ENCODE measurements at regions of chr6 and their contacts with region 1.

Region 1: GRCh38 chr6:123965894-123966293 is 162.2 kb downstream of the NKAIN2 start:
- DNase-seq: peak; percentile 61
- H3K4me3 ChIP-seq: no peak overlapping the region
- H3K27ac ChIP-seq: no peak overlapping the region
- H3K4me1 ChIP-seq: no peaks in the 10 kb centered on the region
- H3K27me3 ChIP-seq: no peaks in the 10 kb centered on the region
- CTCF ChIP-seq: peak; percentile 47 to 48
- POLR2A ChIP-seq: no peak

Region 2: DNA sequence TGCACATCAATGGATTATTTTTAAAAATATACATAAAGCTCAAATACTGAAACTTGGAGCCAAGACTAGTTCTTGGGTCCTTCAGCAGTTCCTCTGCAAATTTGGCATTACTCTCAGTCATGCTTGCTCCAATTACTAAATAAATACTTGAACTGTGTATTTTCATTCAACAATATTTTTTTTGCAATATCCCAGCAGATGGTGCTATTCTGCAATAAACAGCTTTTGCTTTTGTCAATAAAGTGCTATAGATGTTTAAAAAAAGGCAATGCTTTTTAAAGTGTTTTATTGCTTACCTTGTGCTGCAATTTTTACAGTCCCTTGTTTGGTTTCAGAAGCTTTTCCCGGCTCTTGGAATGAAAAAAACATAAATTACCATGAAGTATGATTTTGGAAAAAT is 572.6 kb before region 1 on chr6:
- CTCF ChIA-PET with region 1: no interaction called
- POLR2A ChIA-PET with region 1: no interaction called
- dilution Hi-C with region 1: no loop called
- intact Hi-C with region 1: loop called (anchors 1 kb)
- DNase-seq: peak; percentile 12
- H3K4me3 ChIP-seq: no peak overlapping the region
- H3K27ac ChIP-seq: no peak overlapping the region
- H3K4me1 ChIP-seq: no peaks in the 10 kb centered on the region
- H3K27me3 ChIP-seq: no peaks in the 10 kb centered on the region
- CTCF ChIP-seq: no peak
- POLR2A ChIP-seq: no peak

Region 3: GRCh38 chr6:123415844-123416468 is 549.9 kb before region 1 on chr6:
- CTCF ChIA-PET with region 1: no interaction called
- POLR2A ChIA-PET with region 1: no interaction called
- dilution Hi-C with region 1: no loop called
- intact Hi-C with region 1: loop called (anchors 5 kb)
- DNase-seq: peak; percentile 56
- H3K4me3 ChIP-seq: no peak overlapping the region
- H3K27ac ChIP-seq: no peak overlapping the region
- H3K4me1 ChIP-seq: no peaks in the 10 kb centered on the region
- H3K27me3 ChIP-seq: peaks cover 2 to 6% of the 10 kb centered on the region in 2 experiments
- CTCF ChIP-seq: peak; percentile 50 to 54
- POLR2A ChIP-seq: no peak

Region 4: DNA sequence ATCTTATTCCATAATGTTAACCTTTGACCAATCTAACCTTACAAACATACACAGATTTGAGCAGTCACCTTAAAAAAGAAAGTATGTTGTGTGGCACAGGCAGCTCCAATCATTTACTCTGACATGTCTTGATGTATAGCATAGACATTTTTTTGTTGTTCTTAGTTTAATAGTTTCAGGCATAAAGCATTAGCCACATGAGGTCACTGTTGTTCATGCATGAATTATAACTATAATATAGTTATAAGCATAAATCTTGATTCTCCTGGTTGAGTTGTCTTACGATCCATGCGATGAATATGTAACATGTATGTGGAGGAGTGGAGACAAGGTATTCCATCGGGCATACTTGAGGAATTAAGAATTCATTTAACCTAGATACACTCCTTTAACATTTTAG is 188.3 kb before region 1 on chr6:
- CTCF ChIA-PET with region 1: no interaction called
- POLR2A ChIA-PET with region 1: no interaction called
- dilution Hi-C with region 1: no loop called
- intact Hi-C with region 1: loop called (anchors 1 kb)
- DNase-seq: peak; percentile 46
- H3K4me3 ChIP-seq: no peak overlapping the region
- H3K27ac ChIP-seq: no peak overlapping the region
- H3K4me1 ChIP-seq: no peaks in the 10 kb centered on the region
- H3K27me3 ChIP-seq: no peaks in the 10 kb centered on the region
- CTCF ChIP-seq: peak in 1 of 2 donors; percentile 14
- POLR2A ChIP-seq: no peak

Region 5: DNA sequence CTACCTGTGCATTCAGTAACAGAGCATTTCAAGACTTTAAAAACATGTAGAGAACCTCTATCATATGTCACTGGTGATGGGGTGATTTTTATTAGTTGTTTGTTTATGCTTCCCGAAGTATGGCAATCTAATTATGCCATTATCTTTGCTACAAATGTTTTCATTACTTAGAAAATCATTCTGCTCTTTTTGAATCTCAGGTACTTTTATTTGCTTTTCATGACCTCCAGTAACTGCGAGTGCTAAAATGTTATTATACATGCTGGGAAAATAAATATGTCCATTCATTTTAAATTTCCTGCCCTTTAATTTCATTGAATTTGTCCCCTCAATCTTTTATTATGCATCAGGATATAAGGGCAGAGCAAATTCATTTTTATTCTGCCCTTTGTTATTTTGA is 353.5 kb after region 1 on chr6:
- CTCF ChIA-PET with region 1: no interaction called
- POLR2A ChIA-PET with region 1: no interaction called
- dilution Hi-C with region 1: no loop called
- intact Hi-C with region 1: no loop called
- DNase-seq: no peak
- H3K4me3 ChIP-seq: no peak overlapping the region
- H3K27ac ChIP-seq: no peak overlapping the region
- H3K4me1 ChIP-seq: no peaks in the 10 kb centered on the region
- H3K27me3 ChIP-seq: no peaks in the 10 kb centered on the region
- CTCF ChIP-seq: no peak
- POLR2A ChIP-seq: no peak

Region 6: GRCh38 chr6:124854338-124854922 is 888.5 kb after region 1 on chr6:
- CTCF ChIA-PET with region 1: no interaction called
- POLR2A ChIA-PET with region 1: no interaction called
- dilution Hi-C with region 1: no loop called
- intact Hi-C with region 1: loop called (anchors 10 kb)
- DNase-seq: peak; percentile 16
- H3K4me3 ChIP-seq: no peak overlapping the region
- H3K27ac ChIP-seq: no peak overlapping the region
- H3K4me1 ChIP-seq: no peaks in the 10 kb centered on the region
- H3K27me3 ChIP-seq: peaks cover 0 to 3% of the 10 kb centered on the region in 2 experiments
- CTCF ChIP-seq: no peak
- POLR2A ChIP-seq: no peak

Measured in endothelial cell of umbilical vein (primary cell).